Endothelial cell of umbilical vein (primary cell): ENCODE measurements at regions of chr7 and their contacts with region 1.

Region 1: DNA sequence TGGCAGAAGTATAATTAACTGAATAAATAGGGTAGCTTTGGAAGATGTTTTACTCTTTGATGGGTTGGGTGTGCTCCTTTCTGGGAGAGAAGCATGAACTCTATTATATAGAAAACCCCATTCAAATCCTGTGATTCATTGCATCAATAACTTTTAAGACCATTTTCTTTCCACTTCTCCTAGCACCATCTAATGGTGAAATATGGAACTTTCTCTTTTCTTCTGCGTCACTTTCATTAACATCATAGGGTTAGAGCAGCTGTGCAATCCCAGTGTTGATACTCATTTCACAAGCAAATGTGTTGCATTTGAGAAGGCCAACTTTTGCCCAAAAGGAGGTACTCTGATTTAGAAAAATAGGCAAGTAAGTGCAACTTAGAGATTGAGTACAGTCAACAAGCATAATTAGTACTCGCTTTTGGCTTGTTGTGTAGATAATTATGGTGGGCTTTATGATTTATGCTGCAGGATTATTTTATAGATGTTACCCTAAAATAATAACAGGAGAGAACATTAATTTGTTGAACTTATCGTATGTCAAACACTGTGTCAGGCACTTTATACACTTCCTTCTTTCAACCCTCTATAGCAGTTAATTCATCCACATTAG is 92.9 kb downstream of the CPED1 start:
- DNase-seq: peak; percentile 77
- H3K4me3 ChIP-seq: no peak overlapping the region
- H3K27ac ChIP-seq: no peak overlapping the region
- H3K4me1 ChIP-seq: peaks cover 24% of the 10 kb centered on the region
- H3K27me3 ChIP-seq: no peaks in the 10 kb centered on the region
- CTCF ChIP-seq: peak; percentile 40 to 44
- POLR2A ChIP-seq: no peak

Region 2: DNA sequence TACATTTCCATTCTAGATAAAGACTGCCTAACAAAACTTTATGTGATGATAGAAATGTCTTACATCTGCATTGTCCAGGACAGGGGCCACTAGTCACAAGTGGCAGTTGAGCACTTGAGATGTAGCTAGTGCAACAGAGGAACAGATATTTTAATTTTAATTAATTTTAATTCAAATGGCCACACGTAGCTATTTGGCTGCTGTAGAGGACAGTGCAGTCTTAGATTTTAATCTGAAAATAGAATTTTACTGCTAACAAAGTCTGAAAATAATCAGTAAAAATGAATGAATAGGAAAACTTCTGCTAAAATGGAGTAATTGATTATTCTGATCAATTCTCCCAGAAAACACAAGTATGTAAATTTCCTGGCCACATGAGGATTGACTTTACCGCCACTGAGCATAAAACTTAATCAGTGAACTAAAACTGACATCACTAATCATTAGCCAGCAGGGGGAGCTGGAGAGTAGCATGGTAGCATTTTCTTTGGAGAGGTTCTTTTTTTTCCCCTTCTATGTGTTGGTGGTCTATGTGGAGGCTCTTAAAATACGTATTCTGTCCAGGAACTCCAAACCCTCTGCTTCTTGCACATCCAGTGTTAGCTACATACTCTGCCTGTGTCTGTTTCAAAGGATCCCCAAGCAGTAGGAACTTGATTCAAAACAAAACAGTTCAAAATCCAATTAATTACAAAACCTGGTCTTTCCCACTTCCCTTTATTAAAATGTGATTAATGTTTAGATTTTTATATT is 275.6 kb before region 1 on chr7:
- CTCF ChIA-PET with region 1: interaction called, 18 read pairs
- POLR2A ChIA-PET with region 1: no interaction called
- dilution Hi-C with region 1: no loop called
- intact Hi-C with region 1: loop called (anchors 1 kb)
- DNase-seq: peak; percentile 80
- H3K4me3 ChIP-seq: no peak overlapping the region
- H3K27ac ChIP-seq: no peak overlapping the region
- H3K4me1 ChIP-seq: peaks cover 12% of the 10 kb centered on the region
- H3K27me3 ChIP-seq: no peaks in the 10 kb centered on the region
- CTCF ChIP-seq: peak; percentile 67 to 77
- POLR2A ChIP-seq: no peak

Region 3: GRCh38 chr7:120979765-120980499 is 101.5 kb before region 1 on chr7:
- CTCF ChIA-PET with region 1: interaction called, 156 read pairs
- POLR2A ChIA-PET with region 1: no interaction called
- dilution Hi-C with region 1: loop called (anchors 25 kb)
- intact Hi-C with region 1: no loop called
- DNase-seq: no peak
- H3K4me3 ChIP-seq: no peak overlapping the region
- H3K27ac ChIP-seq: no peak overlapping the region
- H3K4me1 ChIP-seq: no peaks in the 10 kb centered on the region
- H3K27me3 ChIP-seq: no peaks in the 10 kb centered on the region
- CTCF ChIP-seq: no peak
- POLR2A ChIP-seq: no peak

Region 4: GRCh38 chr7:121069346-121070100 is 11.9 kb before region 1 on chr7:
- CTCF ChIA-PET with region 1: interaction called, 13 read pairs
- POLR2A ChIA-PET with region 1: no interaction called
- dilution Hi-C with region 1: no loop called
- intact Hi-C with region 1: no loop called
- DNase-seq: no peak
- H3K4me3 ChIP-seq: no peak overlapping the region
- H3K27ac ChIP-seq: no peak overlapping the region
- H3K4me1 ChIP-seq: no peaks in the 10 kb centered on the region
- H3K27me3 ChIP-seq: no peaks in the 10 kb centered on the region
- CTCF ChIP-seq: no peak
- POLR2A ChIP-seq: no peak